ENCODE measurements at regions of chr20 and their contacts with region 1.

Region 1: DNA sequence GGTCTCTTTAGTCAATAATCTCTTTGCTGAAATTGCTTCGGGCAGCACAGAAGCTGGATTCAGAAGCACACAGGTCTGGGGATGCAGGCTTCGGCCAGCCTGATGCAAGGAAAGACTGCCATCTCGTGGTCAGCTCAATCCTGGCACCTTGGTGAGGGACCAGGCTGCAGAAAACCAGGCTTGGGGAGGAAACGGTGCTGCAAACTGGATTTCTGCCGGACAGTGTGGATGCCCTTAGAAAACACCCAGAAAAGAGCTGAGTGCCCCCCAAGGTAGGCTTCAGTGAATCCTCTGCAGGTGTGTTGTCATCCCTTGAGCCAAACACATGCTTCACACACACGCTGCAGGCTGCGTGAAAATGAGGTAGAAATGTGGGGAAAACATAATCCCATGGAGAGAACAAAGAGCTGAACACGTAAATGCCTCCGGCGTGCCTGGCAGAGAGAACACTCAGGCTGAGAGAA is 89.8 kb upstream of the PAX1 start:
- DNase-seq: peak; percentile 81
- ATAC-seq: peak; percentile 96
- H3K4me3 Mint-ChIP-seq: no peak overlapping the region
- H3K27ac Mint-ChIP-seq: no peak overlapping the region
- H3K4me1 Mint-ChIP-seq: peaks cover 4% of the 10 kb centered on the region
- H3K27me3 Mint-ChIP-seq: peaks cover 22% of the 10 kb centered on the region
- CTCF ChIP-seq: peak; percentile 41

Region 2: GRCh38 chr20:20843982-20844381 is 771.7 kb before region 1 on chr20:
- CTCF ChIA-PET with region 1: interaction called, 10 read pairs
- POLR2A ChIA-PET with region 1: no interaction called
- DNase-seq: peak; percentile 58
- ATAC-seq: peak; percentile 98
- H3K4me3 Mint-ChIP-seq: no peak overlapping the region
- H3K27ac Mint-ChIP-seq: no peak overlapping the region
- H3K4me1 Mint-ChIP-seq: no peaks in the 10 kb centered on the region
- H3K27me3 Mint-ChIP-seq: no peaks in the 10 kb centered on the region; the same call in none of the 2 replicates
- CTCF ChIP-seq: no peak

Region 3: GRCh38 chr20:21529863-21530262 is 85.8 kb before region 1 on chr20:
- CTCF ChIA-PET with region 1: interaction called, 56 read pairs
- POLR2A ChIA-PET with region 1: no interaction called
- DNase-seq: no peak
- ATAC-seq: peak; percentile 69
- H3K4me3 Mint-ChIP-seq: no peak overlapping the region
- H3K27ac Mint-ChIP-seq: no peak overlapping the region
- H3K4me1 Mint-ChIP-seq: peaks cover 22% of the 10 kb centered on the region
- H3K27me3 Mint-ChIP-seq: peaks cover 54% of the 10 kb centered on the region
- CTCF ChIP-seq: peak; percentile 25; the same call in 1 of the 2 replicates

Region 4: DNA sequence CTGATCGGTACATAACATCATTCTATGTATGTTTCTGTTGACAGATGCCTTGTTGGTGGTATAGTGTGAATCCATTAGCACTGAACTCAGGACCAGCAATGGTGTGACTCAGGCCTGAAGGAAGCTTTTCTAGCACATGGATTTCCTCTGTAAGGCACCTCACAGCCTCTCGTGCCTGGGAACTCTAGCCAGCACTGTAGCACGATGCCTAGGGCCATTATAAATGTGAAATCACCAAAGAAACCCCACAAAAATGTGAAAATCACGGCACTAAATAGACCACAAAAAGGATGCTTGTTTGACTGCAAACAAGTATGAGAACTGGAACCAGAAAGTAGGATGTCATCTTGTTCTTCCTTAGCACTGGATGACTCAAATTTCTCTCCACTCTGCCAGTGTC is 38.1 kb before region 1 on chr20:
- CTCF ChIA-PET with region 1: interaction called, 14 read pairs
- POLR2A ChIA-PET with region 1: no interaction called
- DNase-seq: no peak
- ATAC-seq: no peak
- H3K4me3 Mint-ChIP-seq: no peak overlapping the region
- H3K27ac Mint-ChIP-seq: no peak overlapping the region
- H3K4me1 Mint-ChIP-seq: no peaks in the 10 kb centered on the region
- H3K27me3 Mint-ChIP-seq: peaks cover 3% of the 10 kb centered on the region
- CTCF ChIP-seq: no peak

Region 5: GRCh38 chr20:21653628-21654027 is 38.0 kb after region 1 on chr20:
- CTCF ChIA-PET with region 1: no interaction called
- POLR2A ChIA-PET with region 1: no interaction called
- DNase-seq: no peak
- ATAC-seq: no peak
- H3K4me3 Mint-ChIP-seq: no peak overlapping the region
- H3K27ac Mint-ChIP-seq: no peak overlapping the region
- H3K4me1 Mint-ChIP-seq: no peaks in the 10 kb centered on the region
- H3K27me3 Mint-ChIP-seq: peaks cover 7% of the 10 kb centered on the region
- CTCF ChIP-seq: no peak